ENCODE measurements at regions of chr3 and their contacts with region 1.

Region 1: GRCh38 chr3:62188681-62189383 is 184.5 kb downstream of the FEZF2 start:
- DNase-seq: peak; percentile 41 to 82
- H3K4me3 ChIP-seq: no peak overlapping the region
- H3K27ac ChIP-seq: no peak overlapping the region
- H3K4me1 ChIP-seq: peaks cover 0 to 5% (median 3%) of the 10 kb centered on the region in 4 experiments; a peak in 4 of 7 replicates
- H3K27me3 ChIP-seq: no peaks in the 10 kb centered on the region
- CTCF ChIP-seq: peak; percentile 73 to 84 (median 75)
- EP300 ChIP-seq: no peak
- POLR2A ChIP-seq: no peak
- RAD21 ChIP-seq: peak; percentile 85 to 90

Region 2: DNA sequence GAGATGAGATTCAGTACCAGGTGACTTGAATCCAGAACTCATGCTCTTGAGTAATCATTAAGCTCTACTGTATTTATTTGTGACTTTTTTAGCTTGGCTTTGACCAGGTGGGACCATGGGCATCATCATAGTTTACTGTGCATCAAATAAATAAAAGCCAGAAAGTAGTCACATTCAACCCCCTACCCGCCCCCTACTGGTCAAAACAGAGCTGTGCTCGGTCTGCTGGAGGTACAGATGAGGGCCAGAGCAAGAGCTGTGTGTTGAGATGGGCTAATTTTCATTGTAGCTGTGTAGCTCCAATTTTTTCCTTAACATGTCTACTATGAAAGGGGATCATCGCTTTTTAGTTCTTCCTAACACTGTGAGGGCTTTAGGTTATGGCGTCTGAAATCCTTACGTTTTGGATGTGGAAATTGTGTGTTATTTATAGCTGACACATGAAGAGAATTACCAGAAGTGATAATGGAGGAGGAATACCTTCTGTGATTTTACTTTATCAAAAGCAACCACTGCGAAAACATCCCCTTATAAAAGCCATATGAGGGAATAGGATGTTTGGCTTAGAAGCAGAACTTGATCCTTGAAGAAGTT is 252.4 kb before region 1 on chr3:
- CTCF ChIA-PET with region 1: interaction called, 14 read pairs
- POLR2A ChIA-PET with region 1: no interaction called
- DNase-seq: peak in 1 of 2 experiments; percentile 73
- H3K4me3 ChIP-seq: no peak overlapping the region
- H3K27ac ChIP-seq: no peak overlapping the region
- H3K4me1 ChIP-seq: peaks cover 0 to 12% (median 6%) of the 10 kb centered on the region in 4 experiments; a peak in 6 of 7 replicates
- H3K27me3 ChIP-seq: no peaks in the 10 kb centered on the region
- CTCF ChIP-seq: peak; percentile 58 to 82 (median 74)
- EP300 ChIP-seq: no peak
- POLR2A ChIP-seq: no peak
- RAD21 ChIP-seq: peak; percentile 43 to 71; a peak in 3 of 4 replicates

Region 3: DNA sequence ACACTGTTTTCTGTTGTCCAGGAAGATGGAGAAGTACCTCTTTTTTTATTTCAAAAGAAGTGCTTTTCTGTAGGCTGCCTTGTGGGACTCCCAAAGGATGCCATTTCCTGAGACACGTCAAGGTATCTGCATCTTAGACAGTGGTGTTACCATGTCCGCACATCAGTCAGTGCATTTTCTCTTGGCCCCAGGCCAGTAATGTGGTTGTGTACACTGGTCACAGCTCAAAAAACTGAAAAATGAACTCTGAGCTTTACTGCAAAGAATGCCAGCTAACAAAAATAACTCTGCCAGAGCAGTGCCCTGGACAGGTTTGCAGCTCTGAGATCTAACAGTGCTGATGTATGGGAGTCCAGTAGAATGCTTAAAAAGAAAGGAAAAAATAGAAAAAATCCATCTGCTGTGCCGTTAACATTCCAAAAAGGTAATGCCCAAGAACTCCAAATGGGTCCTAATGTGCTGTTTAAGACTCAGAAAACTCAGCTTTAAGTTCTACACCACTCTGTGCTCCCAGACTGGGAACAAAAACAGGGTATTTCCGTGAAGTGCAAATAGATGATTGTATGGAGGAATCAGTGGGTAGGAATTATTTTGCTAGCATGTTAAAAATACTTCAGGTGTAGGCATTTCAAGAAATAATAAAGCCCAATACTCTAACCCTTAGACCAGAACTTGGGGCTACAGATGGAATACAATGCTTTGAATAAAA is 131.3 kb before region 1 on chr3:
- CTCF ChIA-PET with region 1: interaction called, 15 read pairs
- POLR2A ChIA-PET with region 1: no interaction called
- DNase-seq: no peak
- H3K4me3 ChIP-seq: no peak overlapping the region
- H3K27ac ChIP-seq: no peak overlapping the region
- H3K4me1 ChIP-seq: peaks cover 0 to 2% (median 2%) of the 10 kb centered on the region in 4 experiments; a peak in 1 of 7 replicates
- H3K27me3 ChIP-seq: no peaks in the 10 kb centered on the region
- CTCF ChIP-seq: no peak
- EP300 ChIP-seq: no peak
- POLR2A ChIP-seq: no peak
- RAD21 ChIP-seq: no peak

Region 4: DNA sequence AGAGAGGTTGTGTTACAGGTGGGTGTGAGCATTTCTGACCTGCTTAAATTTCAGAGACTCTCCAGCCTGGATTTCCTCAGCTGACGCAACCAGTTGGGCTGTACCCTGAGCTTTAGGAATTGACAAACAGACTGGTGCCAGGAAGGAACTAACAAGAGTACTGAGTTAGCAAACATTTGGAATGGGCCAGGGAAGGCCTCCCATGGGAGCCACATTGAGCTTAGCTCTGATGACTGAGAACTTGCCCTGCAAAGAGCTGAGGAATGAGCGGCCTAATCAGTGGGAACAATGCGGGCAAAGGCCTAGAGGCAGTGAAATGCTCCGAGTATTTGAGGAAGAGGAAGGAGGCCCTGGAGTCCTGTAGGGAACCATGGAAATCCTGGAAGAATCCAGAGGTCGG is 69.7 kb before region 1 on chr3:
- CTCF ChIA-PET with region 1: interaction called, 11 read pairs
- POLR2A ChIA-PET with region 1: no interaction called
- DNase-seq: no peak
- H3K4me3 ChIP-seq: no peak overlapping the region
- H3K27ac ChIP-seq: no peak overlapping the region
- H3K4me1 ChIP-seq: peaks cover 0 to 4% (median under 1%) of the 10 kb centered on the region in 4 experiments; a peak in 1 of 7 replicates
- H3K27me3 ChIP-seq: no peaks in the 10 kb centered on the region
- CTCF ChIP-seq: no peak
- EP300 ChIP-seq: no peak
- POLR2A ChIP-seq: no peak
- RAD21 ChIP-seq: no peak

Region 5: DNA sequence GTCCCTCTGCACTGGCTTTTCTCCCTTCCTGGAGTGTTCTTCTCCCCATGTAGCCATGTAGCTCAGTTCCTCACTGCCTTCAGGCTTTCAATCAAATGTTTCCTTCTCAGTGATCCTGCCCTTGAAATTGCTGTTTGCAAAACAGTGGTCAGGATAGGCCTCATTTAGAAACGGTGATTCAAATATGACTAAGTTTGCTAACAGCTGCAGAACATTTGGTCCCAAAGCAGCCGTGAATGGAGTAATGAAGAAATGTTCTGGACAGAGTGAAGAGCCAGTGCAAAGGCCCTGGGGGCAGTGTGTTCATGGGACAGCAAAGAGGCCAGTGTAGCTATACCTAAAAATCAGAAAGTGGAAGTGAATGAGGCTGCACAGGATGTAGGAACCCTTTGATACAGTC is 38.9 kb before region 1 on chr3:
- CTCF ChIA-PET with region 1: interaction called, 48 read pairs
- POLR2A ChIA-PET with region 1: interaction called, 3 read pairs
- DNase-seq: no peak
- H3K4me3 ChIP-seq: no peak overlapping the region
- H3K27ac ChIP-seq: no peak overlapping the region
- H3K4me1 ChIP-seq: no peaks in the 10 kb centered on the region
- H3K27me3 ChIP-seq: no peaks in the 10 kb centered on the region
- CTCF ChIP-seq: no peak
- EP300 ChIP-seq: no peak
- POLR2A ChIP-seq: no peak
- RAD21 ChIP-seq: no peak

Region 6: DNA sequence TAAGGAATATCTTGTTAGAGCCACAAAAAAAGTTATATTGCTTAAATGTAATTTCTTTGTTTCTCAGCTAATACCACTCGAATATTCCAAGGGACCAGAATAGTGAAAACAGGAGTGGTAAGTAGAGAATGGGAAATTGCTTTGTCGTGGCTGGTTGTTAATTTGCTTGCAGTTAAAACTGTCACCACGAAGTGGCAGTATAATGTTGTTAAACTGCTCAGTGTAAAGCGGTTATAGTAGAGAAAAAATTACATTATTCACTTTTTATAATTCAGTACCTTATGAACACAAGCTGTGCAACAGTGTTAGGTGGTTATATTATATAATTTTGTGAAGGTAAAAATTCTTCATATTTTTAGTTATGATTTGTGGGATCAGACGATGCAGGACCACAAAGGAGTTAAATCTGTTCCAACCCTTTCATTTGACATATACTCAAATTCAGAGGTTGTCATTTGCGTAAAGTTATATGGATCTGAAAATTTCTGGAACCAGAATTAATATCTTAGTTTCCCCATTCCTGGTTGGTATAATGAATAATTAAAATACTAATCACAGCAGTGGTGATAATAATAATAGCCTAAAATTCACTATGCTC is 12.7 kb after region 1 on chr3:
- CTCF ChIA-PET with region 1: interaction called, 46 read pairs
- POLR2A ChIA-PET with region 1: interaction called, 3 read pairs
- DNase-seq: no peak
- H3K4me3 ChIP-seq: no peak overlapping the region
- H3K27ac ChIP-seq: no peak overlapping the region
- H3K4me1 ChIP-seq: no peaks in the 10 kb centered on the region
- H3K27me3 ChIP-seq: no peaks in the 10 kb centered on the region
- CTCF ChIP-seq: peak in 2 of 3 experiments; percentile 39 to 53; a peak in 2 of 4 replicates
- EP300 ChIP-seq: no peak
- POLR2A ChIP-seq: no peak
- RAD21 ChIP-seq: peak; percentile 64 to 68

Region 7: GRCh38 chr3:62318361-62318749 is 129.5 kb after region 1 on chr3:
- CTCF ChIA-PET with region 1: no interaction called
- POLR2A ChIA-PET with region 1: no interaction called
- DNase-seq: no peak
- H3K4me3 ChIP-seq: peak overlapping the region; percentile 65 to 83 (median 76)
- H3K27ac ChIP-seq: peak overlapping the region; percentile 42; the same call in 1 of the 2 replicates
- H3K4me1 ChIP-seq: peaks cover 0 to 3% (median 0%) of the 10 kb centered on the region in 4 experiments; a peak in 2 of 7 replicates
- H3K27me3 ChIP-seq: no peaks in the 10 kb centered on the region; a peak in 2 of 7 replicates
- CTCF ChIP-seq: no peak
- EP300 ChIP-seq: no peak
- POLR2A ChIP-seq: no peak
- RAD21 ChIP-seq: no peak